ENCODE measurements at regions of chr2 and their contacts with region 1.

Region 1: DNA sequence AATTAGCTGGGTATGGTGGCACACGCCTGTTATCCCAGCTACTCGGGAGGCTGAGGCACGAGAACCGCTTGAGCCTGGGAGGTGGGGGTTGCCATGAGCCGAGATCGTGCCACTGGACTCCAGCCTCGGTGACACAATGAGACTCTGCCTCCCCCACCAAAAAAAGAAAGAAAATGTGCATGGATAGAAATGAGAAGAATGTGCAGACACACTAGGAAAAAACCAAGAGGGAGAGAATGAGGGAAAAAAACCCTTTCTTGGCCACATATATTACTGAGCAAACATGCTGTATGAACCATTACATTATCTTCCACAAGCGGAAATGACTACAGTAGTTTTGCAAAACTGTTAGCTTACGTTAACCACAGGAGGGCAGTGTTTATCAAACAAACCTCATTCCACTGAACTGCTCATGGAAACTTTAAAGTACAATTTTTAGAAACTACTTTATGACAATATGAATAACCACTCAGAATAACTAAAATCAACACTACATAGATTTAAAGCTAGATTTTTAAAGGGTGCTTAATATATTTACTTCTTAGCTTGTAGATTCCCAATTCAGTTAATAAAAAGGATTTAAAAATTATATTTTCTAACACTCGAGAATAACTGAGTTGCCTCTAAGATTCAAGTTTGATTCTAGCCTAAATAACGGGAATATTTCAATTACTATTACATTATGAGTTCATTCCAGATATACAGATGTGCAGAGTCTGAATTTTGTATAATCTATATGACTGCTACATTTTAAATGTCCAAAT is 26.4 kb downstream of the ASXL2 start:
- DNase-seq: no peak
- ATAC-seq: peak; percentile 91
- H3K4me3 Mint-ChIP-seq: peak overlapping the region; percentile 58
- H3K27ac Mint-ChIP-seq: peak overlapping the region; percentile 42
- H3K4me1 Mint-ChIP-seq: peaks cover 36% of the 10 kb centered on the region
- H3K27me3 Mint-ChIP-seq: no peaks in the 10 kb centered on the region
- CTCF ChIP-seq: no peak

Region 2: GRCh38 chr2:25673300-25674076 is 178.4 kb before region 1 on chr2 and contains the start of gene DTNB:
- CTCF ChIA-PET with region 1: no interaction called
- POLR2A ChIA-PET with region 1: interaction called, 10 read pairs
- intact Hi-C with region 1: no loop called
- DNase-seq: peak; percentile 83
- ATAC-seq: peak; percentile 79
- H3K4me3 Mint-ChIP-seq: peak within 1 kb of the TSS; percentile 88
- H3K27ac Mint-ChIP-seq: peak within 1 kb of the TSS; percentile 72
- H3K4me1 Mint-ChIP-seq: peaks cover 15% of the 10 kb centered on the region
- H3K27me3 Mint-ChIP-seq: no peaks in the 10 kb centered on the region
- CTCF ChIP-seq: no peak
- total RNA-seq, gene DTNB: 18.3 and 28.9 TPM in 2 replicates

Region 3: DNA sequence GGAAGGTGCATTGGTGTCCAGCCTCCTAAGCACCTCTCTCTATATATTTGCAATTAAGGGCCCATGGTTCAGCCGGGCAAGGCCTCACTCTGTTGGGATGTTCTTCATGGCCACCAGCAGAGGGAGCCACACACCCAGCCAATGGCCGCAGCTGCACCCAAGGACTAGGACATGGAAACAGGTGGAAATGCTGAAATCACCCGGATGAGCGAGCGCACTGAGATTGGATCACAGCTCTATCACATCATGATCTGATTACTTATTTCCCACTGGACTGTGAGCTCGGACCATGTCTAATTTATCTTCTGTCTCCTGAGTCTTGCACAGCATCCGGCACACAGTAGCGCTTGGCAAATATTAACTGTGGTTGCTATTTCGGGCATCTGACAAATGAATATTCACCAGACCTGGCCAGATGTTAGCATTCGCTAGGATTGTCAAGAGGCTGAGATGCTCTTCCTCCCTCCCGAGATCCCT is 99.2 kb after region 1 on chr2:
- CTCF ChIA-PET with region 1: interaction called, 12 read pairs
- POLR2A ChIA-PET with region 1: no interaction called
- intact Hi-C with region 1: loop called (anchors 1 kb)
- DNase-seq: peak; percentile 51
- ATAC-seq: peak; percentile 86
- H3K4me3 Mint-ChIP-seq: no peak overlapping the region
- H3K27ac Mint-ChIP-seq: no peak overlapping the region
- H3K4me1 Mint-ChIP-seq: no peaks in the 10 kb centered on the region
- H3K27me3 Mint-ChIP-seq: no peaks in the 10 kb centered on the region
- CTCF ChIP-seq: peak; percentile 68

Region 4: DNA sequence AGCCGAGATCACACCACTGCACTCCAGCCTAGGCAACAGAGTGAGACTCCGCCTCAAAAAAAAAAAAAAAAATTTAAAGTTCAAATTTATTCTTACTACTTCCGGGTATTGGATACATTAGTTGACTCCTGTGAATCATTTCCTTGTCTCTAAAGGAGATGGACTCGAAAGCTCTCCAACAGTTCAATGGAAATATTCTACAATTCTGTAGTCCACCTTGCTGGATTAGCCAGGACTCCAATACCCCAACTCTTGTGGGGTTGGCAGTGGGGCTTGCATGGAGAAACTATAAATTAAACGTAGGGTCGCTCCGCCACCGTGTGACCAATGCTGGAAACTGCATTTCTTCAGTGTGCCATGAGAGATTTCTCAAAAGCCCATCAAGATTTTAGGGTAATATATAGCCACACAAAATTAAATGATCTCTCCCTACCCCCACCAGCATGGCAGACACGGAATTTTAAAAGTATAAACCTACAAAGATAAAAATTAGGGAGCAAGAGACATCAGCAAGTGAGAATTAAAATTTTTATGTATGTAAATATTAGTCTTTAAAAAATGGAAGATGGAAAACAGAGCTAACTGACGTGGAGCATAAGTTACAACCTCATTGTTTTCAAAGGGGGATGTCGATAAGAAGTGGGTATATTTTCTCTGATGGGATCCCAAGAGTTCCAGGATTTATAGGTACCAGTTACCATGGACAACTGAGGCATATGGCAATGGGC is 293.2 kb after region 1 on chr2:
- CTCF ChIA-PET with region 1: interaction called, 3 read pairs
- POLR2A ChIA-PET with region 1: no interaction called
- intact Hi-C with region 1: loop called (anchors 1 kb)
- DNase-seq: peak; percentile 25
- ATAC-seq: peak; percentile 77
- H3K4me3 Mint-ChIP-seq: peak overlapping the region; percentile 46
- H3K27ac Mint-ChIP-seq: no peak overlapping the region
- H3K4me1 Mint-ChIP-seq: peaks cover 4% of the 10 kb centered on the region
- H3K27me3 Mint-ChIP-seq: peaks cover 10% of the 10 kb centered on the region
- CTCF ChIP-seq: no peak